SK-N-SH (cell line): ENCODE measurements at regions of chr1 and their contacts with region 1.

Region 1: DNA sequence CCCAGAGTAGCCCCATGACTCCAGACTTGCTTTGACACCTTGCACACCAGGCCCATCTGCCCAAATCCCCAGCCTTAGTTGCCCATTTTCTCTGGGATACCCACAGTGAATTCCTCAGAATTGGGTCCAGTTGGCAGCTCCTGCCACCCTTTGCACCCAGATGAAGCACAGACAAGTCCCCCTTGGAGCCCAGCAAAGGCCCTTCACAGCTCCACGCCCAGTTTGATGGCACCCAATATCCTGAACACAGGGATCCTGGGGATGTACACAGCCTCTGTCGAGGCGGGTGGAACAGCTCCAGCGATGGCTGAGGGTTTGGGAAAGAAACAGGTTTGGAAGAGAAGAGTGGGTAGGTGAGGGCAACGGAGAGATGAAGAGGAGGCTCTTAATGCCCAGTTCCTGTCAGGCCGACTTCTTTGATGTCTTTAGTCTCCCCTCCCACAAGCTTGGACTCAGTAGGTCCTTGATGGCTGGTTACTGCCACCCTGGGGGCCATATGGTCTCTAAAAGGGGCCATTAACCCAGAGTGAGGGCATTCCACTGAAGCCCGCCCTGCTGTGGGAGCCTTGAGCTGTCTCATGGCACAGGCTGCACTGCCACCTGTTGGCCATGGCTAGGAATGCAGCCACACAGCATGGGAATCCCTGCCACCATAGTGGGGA is 21.7 kb downstream of the TMEM53 start:
- DNase-seq: peak; percentile 88
- H3K4me3 ChIP-seq: peak overlapping the region in 1 of 2 experiments; percentile 35; a peak in 1 of 4 replicates
- H3K27ac ChIP-seq: no peak overlapping the region
- H3K4me1 ChIP-seq: peaks cover 0 to 31% of the 10 kb centered on the region in 2 experiments; a peak in 1 of 4 replicates
- H3K27me3 ChIP-seq: no peaks in the 10 kb centered on the region
- CTCF ChIP-seq: peak; percentile 93
- EP300 ChIP-seq: no peak
- RAD21 ChIP-seq: peak; percentile 98

Region 2: DNA sequence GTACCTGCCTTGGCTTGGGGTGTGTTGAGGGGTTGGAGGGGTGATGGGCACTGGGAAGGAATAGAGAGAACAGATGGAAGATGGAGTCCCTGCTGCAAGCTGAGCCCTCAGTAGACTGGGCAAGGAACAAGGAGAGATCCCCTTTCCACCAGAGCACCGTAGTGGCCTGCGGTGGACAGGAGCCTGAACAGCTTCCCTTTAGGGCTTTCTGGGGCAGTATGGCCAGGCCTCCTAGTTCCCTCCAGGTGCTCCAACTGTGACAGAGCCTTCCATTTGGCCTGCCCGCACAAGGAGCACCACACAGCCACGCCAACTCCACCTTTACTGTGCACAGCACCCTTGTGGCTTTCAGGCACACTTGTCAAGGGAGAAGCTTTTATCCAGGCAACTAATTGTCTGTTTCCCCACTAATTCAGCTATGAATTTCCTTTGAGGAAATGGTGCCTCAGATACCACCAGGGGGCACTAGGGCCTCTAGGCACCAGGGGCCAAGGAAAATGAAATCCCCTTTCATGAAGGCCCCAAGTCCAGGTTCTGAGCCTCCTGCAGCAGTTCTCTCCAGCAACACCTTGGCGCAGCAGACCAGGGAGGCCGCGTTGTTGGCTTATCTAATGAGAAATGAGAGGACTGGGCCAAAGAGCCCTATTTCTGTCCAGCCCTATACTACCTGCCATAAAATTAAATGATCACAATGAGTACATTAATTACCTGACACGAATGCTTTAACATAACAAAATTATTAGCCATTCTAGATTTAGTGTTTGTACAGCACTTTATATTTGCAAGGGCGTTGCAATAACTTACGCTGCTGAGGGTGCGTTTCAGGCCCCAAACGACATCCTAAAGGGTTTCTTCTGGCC is 274.4 kb before region 1 on chr1:
- CTCF ChIA-PET with region 1: interaction called, 21 read pairs
- POLR2A ChIA-PET with region 1: no interaction called
- DNase-seq: peak; percentile 43
- H3K4me3 ChIP-seq: no peak overlapping the region
- H3K27ac ChIP-seq: no peak overlapping the region
- H3K4me1 ChIP-seq: no peaks in the 10 kb centered on the region
- H3K27me3 ChIP-seq: peaks cover 26% of the 10 kb centered on the region
- CTCF ChIP-seq: peak; percentile 68
- EP300 ChIP-seq: no peak
- RAD21 ChIP-seq: peak; percentile 58

Region 3: GRCh38 chr1:44602634-44603628 is 49.6 kb before region 1 on chr1:
- CTCF ChIA-PET with region 1: interaction called, 150 read pairs
- POLR2A ChIA-PET with region 1: interaction called, 10 read pairs
- DNase-seq: peak; percentile 69
- H3K4me3 ChIP-seq: no peak overlapping the region; a peak in 1 of 4 replicates
- H3K27ac ChIP-seq: no peak overlapping the region
- H3K4me1 ChIP-seq: peaks cover 0 to 24% of the 10 kb centered on the region in 2 experiments; a peak in 2 of 4 replicates
- H3K27me3 ChIP-seq: peaks cover 25% of the 10 kb centered on the region; the same call in 1 of the 2 replicates
- CTCF ChIP-seq: no peak
- EP300 ChIP-seq: peak in 1 of 2 experiments; percentile 37; a peak in 1 of 4 replicates
- RAD21 ChIP-seq: no peak

Region 4: GRCh38 chr1:44616991-44617702 is 35.4 kb before region 1 on chr1:
- CTCF ChIA-PET with region 1: interaction called, 150 read pairs
- POLR2A ChIA-PET with region 1: interaction called, 5 read pairs
- DNase-seq: peak; percentile 71
- H3K4me3 ChIP-seq: peak overlapping the region; percentile 50 to 62
- H3K27ac ChIP-seq: peak overlapping the region in 1 of 2 experiments; percentile 76; a peak in 2 of 4 replicates
- H3K4me1 ChIP-seq: peaks cover 12 to 15% of the 10 kb centered on the region in 2 experiments; a peak in 3 of 4 replicates
- H3K27me3 ChIP-seq: no peaks in the 10 kb centered on the region
- CTCF ChIP-seq: no peak
- EP300 ChIP-seq: no peak
- RAD21 ChIP-seq: no peak

Region 5: GRCh38 chr1:44674113-44675000 is 21.8 kb after region 1 on chr1 and contains the starts of genes ARMH1 and TMEM53:
- CTCF ChIA-PET with region 1: interaction called, 48 read pairs
- POLR2A ChIA-PET with region 1: interaction called, 6 read pairs
- DNase-seq: peak; percentile 94
- H3K4me3 ChIP-seq: peak within 1 kb of the TSS; percentile 68 to 77
- H3K27ac ChIP-seq: peak within 1 kb of the TSS; percentile 76 to 94
- H3K4me1 ChIP-seq: peaks cover 7 to 24% of the 10 kb centered on the region in 2 experiments; a peak in 1 of 4 replicates
- H3K27me3 ChIP-seq: no peaks in the 10 kb centered on the region
- CTCF ChIP-seq: 0 out of 2 replicates have a peak, but pooled peaks have one; percentile 19
- EP300 ChIP-seq: no peak
- RAD21 ChIP-seq: no peak
- polyA plus RNA-seq, gene ARMH1: 6.6 and 10.5 TPM in 2 replicates
- polyA plus RNA-seq, gene TMEM53: 14.9 and 16.9 TPM in 2 replicates